Motor neuron (in vitro differentiated cells): ENCODE measurements at regions of chr15 and their contacts with region 1.

Region 1: GRCh38 chr15:76866716-76867321 is 38.3 kb downstream of the SCAPER start:
- ATAC-seq: peak in 1 of 8 experiments; percentile 45
- H3K4me3 ChIP-seq: no peak overlapping the region
- H3K27ac ChIP-seq: no peak overlapping the region
- H3K4me1 ChIP-seq: no peaks in the 10 kb centered on the region

Region 2: DNA sequence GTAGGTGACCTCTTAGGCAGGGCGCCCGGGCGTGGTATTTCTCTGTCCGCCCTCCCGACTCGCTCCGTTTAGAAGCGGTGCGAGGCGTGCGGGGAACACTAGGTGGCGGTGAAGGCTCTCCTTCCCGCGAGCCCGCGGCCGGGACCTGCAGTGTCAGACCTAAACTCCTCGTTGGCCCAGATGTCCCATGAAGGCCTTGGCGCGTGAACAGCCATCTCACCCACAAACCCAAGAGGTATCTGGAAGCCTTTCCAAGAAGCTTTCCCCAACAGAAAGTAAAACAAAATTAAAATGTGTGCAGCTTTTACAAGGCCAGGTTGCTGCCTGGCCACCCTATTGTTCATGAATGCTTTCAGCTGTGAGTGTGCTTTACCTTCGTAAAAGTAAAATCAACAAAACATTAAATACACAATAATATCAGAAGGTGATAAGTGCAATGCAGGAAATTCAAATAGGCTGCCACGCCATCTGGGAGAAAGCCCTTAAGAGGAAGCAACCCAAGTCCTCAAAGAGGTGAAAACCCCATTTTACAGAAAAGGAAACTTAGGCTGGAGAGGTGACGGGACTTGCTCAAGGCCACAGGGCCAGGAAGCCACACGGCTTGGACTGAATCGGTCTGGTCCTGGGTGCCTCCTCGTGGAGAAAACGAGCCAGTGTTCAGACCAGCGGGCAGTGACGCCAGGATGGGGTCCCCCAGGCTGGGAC is 675.8 kb before region 1 on chr15:
- in situ Hi-C with region 1: loop called in 2 of 9 experiments (anchors 25 kb)
- ATAC-seq: peak; percentile 86 to 96 (median 94)
- H3K4me3 ChIP-seq: peak overlapping the region in 1 of 5 donors; percentile 9
- H3K27ac ChIP-seq: no peak overlapping the region
- H3K4me1 ChIP-seq: peaks cover 16 to 25% of the 10 kb centered on the region in 2 donors